PC-9 (cell line): ENCODE measurements at regions of chr2 and their contacts with region 1.

Region 1: GRCh38 chr2:9333591-9334171 is 89.6 kb downstream of the ITGB1BP1 start:
- DNase-seq: peak; percentile 76 to 92
- H3K4me3 ChIP-seq: no peak overlapping the region
- H3K27ac ChIP-seq: peak overlapping the region; percentile 50
- H3K4me1 ChIP-seq: peaks cover 55% of the 10 kb centered on the region
- H3K27me3 ChIP-seq: no peaks in the 10 kb centered on the region
- CTCF ChIP-seq: peak; percentile 75

Region 2: DNA sequence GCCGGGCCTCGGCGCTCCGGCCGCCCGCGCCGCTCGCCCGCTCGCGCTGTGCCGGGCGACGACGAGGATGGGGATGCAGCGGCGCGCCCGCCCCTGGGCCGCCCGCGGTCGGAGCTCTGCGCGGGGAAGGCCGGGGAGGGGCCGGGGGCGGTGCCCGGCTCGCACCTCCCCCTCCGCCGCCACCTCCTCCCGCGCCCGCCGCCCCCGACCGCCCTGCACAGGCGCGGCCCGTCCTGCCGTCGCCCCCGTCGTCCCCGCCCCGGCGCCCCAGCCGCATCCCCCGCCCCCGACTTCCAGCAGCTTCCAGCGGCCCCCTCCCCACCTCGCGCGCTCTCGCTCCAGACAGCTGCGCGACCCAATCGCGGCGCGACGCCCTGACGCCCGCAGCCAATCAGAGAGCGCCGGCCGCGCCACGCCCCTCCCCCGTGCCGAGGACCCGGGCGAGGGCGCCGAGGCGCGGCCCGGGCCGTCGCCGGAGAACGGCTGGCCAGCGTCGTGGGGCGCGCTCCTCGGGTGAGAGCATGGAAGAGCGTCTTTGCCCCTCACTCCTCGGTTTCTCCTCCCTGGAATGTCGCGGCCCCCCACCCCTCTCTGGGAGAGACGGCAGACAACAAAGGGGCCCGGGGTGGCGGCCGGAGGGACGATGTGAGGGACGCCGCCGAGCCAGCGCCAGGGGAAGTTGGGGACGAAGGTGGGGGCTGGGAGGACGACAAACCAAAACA is 329.9 kb before region 1 on chr2 and contains the start of gene MBOAT2:
- CTCF ChIA-PET with region 1: no interaction called
- POLR2A ChIA-PET with region 1: no interaction called
- intact Hi-C with region 1: loop called (anchors 10 kb)
- DNase-seq: peak; percentile 72 to 89
- H3K4me3 ChIP-seq: peak within 1 kb of the TSS; percentile 83
- H3K27ac ChIP-seq: peak within 1 kb of the TSS; percentile 97
- H3K4me1 ChIP-seq: peaks cover 47% of the 10 kb centered on the region
- H3K27me3 ChIP-seq: no peaks in the 10 kb centered on the region
- CTCF ChIP-seq: no peak
- total RNA-seq, gene MBOAT2: 45.3 and 57.7 TPM in 2 replicates

Region 3: DNA sequence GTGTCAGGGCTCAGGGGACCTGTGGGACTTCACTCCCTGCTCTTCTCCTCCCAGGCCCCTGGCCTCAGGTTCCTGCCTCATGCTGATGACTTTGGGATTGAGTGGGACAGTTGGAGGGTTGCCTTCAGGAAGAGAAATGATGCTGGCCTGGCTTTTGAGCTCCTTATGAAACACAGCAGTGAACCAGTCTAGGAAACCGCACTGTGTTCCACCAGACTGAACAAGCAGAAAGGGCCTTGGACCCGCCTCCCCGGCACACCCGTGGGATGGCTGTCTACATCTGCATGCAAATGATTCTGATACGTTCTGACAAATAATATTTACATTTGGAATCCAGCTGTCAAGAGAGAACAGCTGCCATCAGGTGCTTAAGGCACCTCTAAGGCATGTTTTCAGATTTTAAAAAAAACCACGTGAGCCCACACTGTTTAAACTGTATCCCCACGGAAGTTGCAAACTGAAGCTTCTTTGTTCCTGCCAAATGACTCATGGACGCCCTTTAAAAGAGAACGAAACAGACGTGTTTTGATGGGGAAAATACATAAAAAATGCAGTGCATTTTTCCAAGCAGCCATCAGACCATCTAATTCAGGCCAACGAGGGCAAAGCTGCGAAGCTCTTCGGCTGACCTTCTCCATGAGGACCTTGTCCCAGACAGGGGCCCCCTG is 154.6 kb before region 1 on chr2:
- CTCF ChIA-PET with region 1: no interaction called
- POLR2A ChIA-PET with region 1: no interaction called
- intact Hi-C with region 1: loop called (anchors 10 kb)
- DNase-seq: peak; percentile 54 to 89
- H3K4me3 ChIP-seq: peak overlapping the region; percentile 18; the same call in 1 of the 2 replicates
- H3K27ac ChIP-seq: peak overlapping the region; percentile 90
- H3K4me1 ChIP-seq: peaks cover 69% of the 10 kb centered on the region
- H3K27me3 ChIP-seq: no peaks in the 10 kb centered on the region
- CTCF ChIP-seq: no peak

Region 4: GRCh38 chr2:9251154-9252001 is 82.3 kb before region 1 on chr2:
- CTCF ChIA-PET with region 1: no interaction called
- POLR2A ChIA-PET with region 1: no interaction called
- intact Hi-C with region 1: loop called (anchors 1 kb)
- DNase-seq: peak; percentile 81 to 94
- H3K4me3 ChIP-seq: peak overlapping the region; percentile 9; the same call in 1 of the 2 replicates
- H3K27ac ChIP-seq: peak overlapping the region; percentile 67
- H3K4me1 ChIP-seq: peaks cover 59% of the 10 kb centered on the region
- H3K27me3 ChIP-seq: no peaks in the 10 kb centered on the region
- CTCF ChIP-seq: no peak

Region 5: DNA sequence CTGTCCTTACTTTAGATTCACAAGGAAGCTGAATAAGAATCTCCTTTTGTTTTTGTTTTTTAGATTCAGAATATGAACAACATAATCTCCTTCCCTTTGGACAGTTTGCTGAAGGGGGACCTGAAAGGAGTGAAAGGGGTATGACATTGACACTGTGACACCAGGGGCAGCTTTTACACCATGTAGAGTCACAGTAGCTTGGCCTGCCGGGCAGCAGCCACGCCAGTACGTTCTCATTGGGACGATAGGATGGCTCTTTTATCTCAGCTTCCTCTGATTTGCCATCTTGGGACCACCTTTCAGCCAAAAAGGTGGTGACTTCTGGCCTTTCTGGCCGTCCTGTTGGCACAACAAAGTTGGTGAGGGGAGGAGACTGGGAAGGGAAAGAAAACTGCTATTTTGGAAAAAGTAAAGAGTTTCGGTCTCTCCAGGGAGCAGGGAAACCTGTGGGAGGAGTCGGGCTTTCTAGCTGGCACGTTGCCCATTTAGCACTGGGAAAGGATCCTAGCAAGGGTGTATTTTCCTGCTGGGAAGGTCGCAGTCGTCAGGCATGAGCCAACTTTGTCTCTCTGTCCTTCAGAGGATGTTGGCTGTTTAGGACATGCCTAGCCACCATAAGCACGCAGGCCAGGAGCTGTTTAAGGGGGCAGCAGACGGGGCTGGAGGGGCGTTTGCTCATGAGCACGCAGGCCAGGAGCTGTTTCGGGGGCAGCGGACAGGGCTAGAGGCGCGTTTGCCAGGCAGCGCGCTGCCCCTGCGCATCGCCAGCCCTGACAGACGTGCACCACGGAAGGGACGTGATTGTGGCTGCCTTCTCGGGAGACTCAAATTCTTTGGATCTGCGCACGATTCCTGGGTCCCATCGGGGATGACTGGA is 15.0 kb before region 1 on chr2:
- CTCF ChIA-PET with region 1: no interaction called
- POLR2A ChIA-PET with region 1: no interaction called
- intact Hi-C with region 1: loop called (anchors 1 kb)
- DNase-seq: no peak
- H3K4me3 ChIP-seq: no peak overlapping the region
- H3K27ac ChIP-seq: no peak overlapping the region
- H3K4me1 ChIP-seq: 0 out of 2 replicates have a peak, but pooled peaks cover 7% of the 10 kb centered on the region
- H3K27me3 ChIP-seq: no peaks in the 10 kb centered on the region
- CTCF ChIP-seq: no peak

Region 6: GRCh38 chr2:9473985-9474360 is 140.3 kb after region 1 on chr2:
- CTCF ChIA-PET with region 1: interaction called, 10 read pairs
- POLR2A ChIA-PET with region 1: no interaction called
- intact Hi-C with region 1: no loop called
- DNase-seq: no peak
- H3K4me3 ChIP-seq: peak overlapping the region; percentile 81; the same call in 1 of the 2 replicates
- H3K27ac ChIP-seq: no peak overlapping the region
- H3K4me1 ChIP-seq: peaks cover 11% of the 10 kb centered on the region
- H3K27me3 ChIP-seq: no peaks in the 10 kb centered on the region
- CTCF ChIP-seq: no peak